ENCODE measurements at regions of chr17 and their contacts with region 1.

Region 1: DNA sequence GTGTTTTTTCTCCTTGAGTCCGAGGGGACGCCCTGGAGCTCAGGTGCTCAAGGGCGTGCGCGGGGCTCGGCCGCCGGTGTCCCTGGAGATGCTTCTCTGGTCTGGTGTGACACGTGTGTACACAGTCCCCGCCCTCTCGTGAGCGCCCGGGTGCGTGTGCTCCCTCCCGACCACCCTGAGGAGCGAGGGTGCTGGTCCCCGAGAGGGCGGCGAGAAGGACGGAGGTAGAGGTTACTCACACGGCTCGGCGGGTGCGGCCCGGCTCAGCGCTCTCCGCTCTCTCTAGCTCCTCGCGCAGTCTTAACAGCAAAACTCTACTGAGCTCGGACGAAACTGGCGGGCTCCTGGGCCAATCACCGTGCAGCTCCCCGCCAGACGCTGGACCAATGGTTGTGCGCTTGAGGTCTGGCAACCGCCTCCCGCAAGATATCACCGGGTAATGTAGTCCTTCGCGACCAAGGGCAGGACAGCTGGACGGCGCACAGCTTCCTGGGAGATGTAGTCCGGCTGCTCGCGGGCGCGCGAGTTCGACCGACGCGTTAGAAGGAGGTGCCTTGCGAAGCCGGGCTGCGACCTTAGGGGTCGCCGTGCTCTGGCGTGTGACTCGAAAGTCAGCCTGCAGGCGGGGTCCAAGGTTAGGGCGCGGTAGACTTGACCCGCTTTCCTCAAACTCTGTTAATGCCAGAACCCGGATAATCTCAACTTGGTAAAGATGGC is at the start of gene SLC25A19:
- DNase-seq: peak; percentile 97
- H3K4me3 Mint-ChIP-seq: peak within 1 kb of the TSS; percentile 97
- H3K27ac Mint-ChIP-seq: peak within 1 kb of the TSS; percentile 100
- H3K4me1 Mint-ChIP-seq: peaks cover 19% of the 10 kb centered on the region
- H3K27me3 Mint-ChIP-seq: no peaks in the 10 kb centered on the region
- total RNA-seq, gene SLC25A19: 119 and 126 TPM in 2 replicates

Region 2: DNA sequence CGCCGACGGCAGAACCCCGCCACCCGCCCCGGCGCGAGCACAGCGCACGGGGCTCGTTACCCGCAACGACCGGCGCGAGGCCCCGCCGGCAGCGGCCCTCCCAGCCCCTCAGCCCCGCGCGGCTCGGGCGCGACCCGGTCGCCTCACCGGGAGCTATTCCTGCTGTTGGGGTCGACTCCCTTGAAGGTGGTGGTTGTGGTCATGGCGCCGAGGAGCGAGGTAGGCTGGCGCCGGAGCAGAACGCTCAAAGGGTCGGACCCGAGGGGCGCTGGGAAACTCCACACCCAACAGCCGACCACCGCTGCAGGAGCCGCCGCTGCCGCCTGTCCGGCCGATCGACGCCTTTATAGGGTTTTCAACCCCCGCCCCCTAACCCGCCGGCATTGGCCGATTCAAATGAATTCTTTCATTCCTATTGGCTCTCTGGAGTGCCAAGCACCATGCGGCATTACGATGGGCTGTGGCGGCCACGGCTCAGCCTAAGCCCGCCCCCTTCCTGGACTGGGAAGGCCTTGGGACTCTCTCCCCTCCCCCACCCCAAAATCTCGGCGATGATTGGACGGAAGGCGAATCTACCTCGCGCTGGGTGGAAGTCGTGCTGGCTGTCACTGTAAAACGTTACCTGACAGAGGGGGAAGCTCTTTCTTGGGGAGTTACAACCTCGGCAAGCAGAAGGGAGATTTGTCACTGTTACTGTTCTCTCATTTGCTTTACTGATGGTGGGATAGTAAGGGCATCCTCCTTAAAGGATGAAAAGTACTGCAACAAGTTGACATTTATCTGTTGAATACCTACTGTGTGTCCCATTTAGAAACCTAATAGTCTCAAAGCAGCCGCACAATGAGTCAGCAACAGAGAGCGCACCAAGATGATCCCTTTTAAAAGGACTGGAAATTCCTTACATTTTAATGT is 134.8 kb before region 1 on chr17 and contains the start of gene JPT1:
- intact Hi-C with region 1: loop called (anchors 1 kb)
- DNase-seq: peak; percentile 97
- H3K4me3 Mint-ChIP-seq: peak within 1 kb of the TSS; percentile 97
- H3K27ac Mint-ChIP-seq: peak within 1 kb of the TSS; percentile 93
- H3K4me1 Mint-ChIP-seq: peaks cover 34% of the 10 kb centered on the region
- H3K27me3 Mint-ChIP-seq: no peaks in the 10 kb centered on the region
- total RNA-seq, gene JPT1: 271 and 299 TPM in 2 replicates

Region 3: DNA sequence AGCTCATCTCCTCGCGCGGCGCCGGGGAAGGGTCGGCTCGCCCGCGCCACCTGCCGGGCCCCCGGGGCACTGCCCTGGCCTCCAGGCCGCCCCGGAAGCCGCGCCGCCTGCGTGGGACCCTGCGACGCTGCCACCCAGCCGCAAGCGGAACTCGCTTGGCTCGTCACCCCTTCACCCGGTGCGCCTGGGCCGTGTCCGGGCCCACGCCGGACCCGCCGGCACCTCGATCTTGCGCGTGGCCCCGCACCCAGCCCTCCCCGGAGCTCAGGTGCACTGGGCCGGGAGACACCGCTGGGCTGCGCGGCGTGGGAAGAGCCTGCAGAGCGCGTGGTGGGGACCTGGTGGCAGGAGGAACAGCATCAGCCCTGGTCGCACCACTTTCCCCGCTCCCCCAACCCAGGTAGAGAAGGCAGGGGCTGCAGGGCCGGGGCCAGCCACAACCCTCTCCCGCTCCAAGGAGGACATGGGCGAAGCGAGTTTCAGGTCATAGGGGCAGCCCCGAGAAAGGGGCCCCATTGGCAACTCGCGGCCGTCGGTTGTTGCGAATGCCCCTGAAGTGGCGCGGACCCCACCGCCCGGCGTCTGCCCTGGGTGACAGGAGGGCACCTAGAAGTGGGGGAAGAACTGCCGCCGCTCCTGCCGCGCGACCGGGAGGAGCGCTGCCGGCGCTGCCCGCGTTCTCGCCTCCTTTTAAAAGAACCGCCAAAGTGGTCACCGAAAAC is 17.9 kb before region 1 on chr17:
- intact Hi-C with region 1: loop called (anchors 1 kb)
- DNase-seq: peak; percentile 90
- H3K4me3 Mint-ChIP-seq: peak overlapping the region; percentile 92
- H3K27ac Mint-ChIP-seq: peak overlapping the region; percentile 86
- H3K4me1 Mint-ChIP-seq: peaks cover 36% of the 10 kb centered on the region
- H3K27me3 Mint-ChIP-seq: no peaks in the 10 kb centered on the region

Region 4: DNA sequence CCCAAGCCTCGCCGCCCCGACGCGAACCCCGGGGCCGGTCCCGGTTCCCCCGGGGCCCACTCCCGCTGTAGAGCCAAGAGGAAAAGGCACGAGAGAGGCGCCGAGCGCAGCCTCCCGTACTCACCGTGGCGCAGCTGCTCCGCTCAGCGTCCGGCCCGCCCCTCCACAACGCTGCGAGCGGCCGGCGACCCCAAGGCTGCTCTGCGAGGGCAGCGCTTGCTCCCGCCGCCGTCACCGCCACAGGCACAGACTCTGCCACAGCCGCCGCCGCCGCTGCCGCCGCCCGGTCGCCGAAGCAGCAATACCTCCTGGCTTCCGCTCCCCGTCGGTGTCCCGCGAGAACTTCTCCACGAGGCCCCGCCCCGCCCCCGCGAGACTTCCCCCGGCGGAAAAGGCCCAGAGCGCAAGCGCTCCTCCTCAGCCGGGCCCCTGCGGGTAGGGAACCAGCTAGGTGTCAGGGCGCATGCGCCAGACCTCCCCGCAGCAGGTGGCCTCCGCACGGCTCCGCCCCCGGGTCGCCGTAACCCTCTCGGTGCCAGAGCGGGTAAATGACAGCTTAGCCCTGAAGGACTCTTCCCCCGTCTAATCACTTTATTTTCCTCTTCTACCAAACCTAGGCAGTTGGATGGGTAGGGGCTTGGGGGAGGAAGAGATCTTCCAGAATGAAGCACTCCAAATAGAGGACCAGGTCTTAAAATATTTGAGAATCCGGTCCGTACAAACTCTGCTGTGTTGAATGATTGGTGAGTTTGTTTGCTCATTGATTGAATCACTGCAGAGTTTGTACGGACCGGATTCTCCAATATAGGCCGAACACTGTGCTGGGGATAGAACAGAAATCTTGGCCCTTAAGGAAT is 116.3 kb after region 1 on chr17 and contains the start of gene GRB2:
- intact Hi-C with region 1: loop called (anchors 1 kb)
- DNase-seq: peak; percentile 100
- H3K4me3 Mint-ChIP-seq: peak within 1 kb of the TSS; percentile 97
- H3K27ac Mint-ChIP-seq: peak within 1 kb of the TSS; percentile 97
- H3K4me1 Mint-ChIP-seq: peaks cover 47% of the 10 kb centered on the region
- H3K27me3 Mint-ChIP-seq: no peaks in the 10 kb centered on the region
- total RNA-seq, gene GRB2: 172 and 183 TPM in 2 replicates

Region 5: GRCh38 chr17:75515496-75516254 is 226.4 kb after region 1 on chr17 and contains the start of gene CASKIN2:
- intact Hi-C with region 1: loop called (anchors 1 kb)
- DNase-seq: peak; percentile 62
- H3K4me3 Mint-ChIP-seq: peak within 1 kb of the TSS; percentile 78
- H3K27ac Mint-ChIP-seq: no peak within 1 kb of the TSS
- H3K4me1 Mint-ChIP-seq: peaks cover 18% of the 10 kb centered on the region
- H3K27me3 Mint-ChIP-seq: peaks cover 17% of the 10 kb centered on the region
- total RNA-seq, gene CASKIN2: 0.88 and 2.0 TPM in 2 replicates